H1 (cell line): ENCODE measurements at regions of chr1 and their contacts with region 1.

Region 1: DNA sequence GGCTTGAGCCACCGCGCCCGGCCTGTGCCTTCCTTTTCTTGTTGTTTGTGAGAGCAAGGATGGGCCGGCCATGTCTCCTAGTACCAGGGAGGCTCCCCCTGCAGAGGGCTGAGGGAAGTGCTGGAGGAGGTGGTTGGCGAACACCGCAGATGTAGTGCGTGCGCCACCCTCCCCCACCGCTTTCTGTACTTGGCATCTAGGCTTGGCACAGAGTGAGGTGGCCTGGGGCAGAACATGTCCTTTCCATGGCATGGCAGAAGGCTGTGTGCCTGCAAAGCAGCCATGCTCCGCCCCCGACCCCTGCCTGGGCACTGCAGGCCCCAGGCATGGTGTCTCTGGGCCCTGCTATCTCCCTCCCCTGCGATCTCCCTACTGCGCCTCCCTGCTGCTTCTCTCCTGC is 30.7 kb downstream of the ALPL start:
- DNase-seq: peak in 1 of 2 experiments; percentile 87
- H3K4me3 ChIP-seq: no peak overlapping the region
- H3K27ac ChIP-seq: no peak overlapping the region
- H3K4me1 ChIP-seq: peaks cover 10 to 24% (median 16%) of the 10 kb centered on the region in 4 experiments
- H3K27me3 ChIP-seq: no peaks in the 10 kb centered on the region
- CTCF ChIP-seq: peak; percentile 62 to 87 (median 79)
- EP300 ChIP-seq: no peak
- POLR2A ChIP-seq: no peak
- RAD21 ChIP-seq: peak; percentile 20 to 55; a peak in 3 of 4 replicates

Region 2: DNA sequence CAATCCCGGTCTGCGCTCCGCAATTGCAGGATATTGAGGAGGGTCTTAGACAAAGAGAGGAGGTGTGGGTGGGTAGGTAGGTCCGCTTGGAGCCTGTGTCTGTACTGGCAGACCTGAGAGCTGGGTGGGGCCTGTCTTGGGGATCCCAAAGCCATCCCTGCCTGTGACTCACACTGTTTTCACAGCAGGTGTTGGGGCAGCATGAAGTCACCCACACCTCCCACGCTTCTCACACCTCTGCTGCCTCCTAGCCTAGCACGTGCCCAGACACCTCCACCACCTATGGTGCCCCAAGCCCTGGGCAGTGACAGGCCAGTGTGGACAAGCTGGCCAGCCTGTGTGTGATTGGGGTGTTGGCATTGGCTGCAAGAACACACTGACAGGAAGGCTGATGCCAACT is 184.0 kb before region 1 on chr1:
- CTCF ChIA-PET with region 1: no interaction called
- POLR2A ChIA-PET with region 1: no interaction called
- DNase-seq: no peak
- H3K4me3 ChIP-seq: no peak overlapping the region
- H3K27ac ChIP-seq: no peak overlapping the region
- H3K4me1 ChIP-seq: peaks cover 0 to 2% (median 0%) of the 10 kb centered on the region in 4 experiments; a peak in 1 of 7 replicates
- H3K27me3 ChIP-seq: no peaks in the 10 kb centered on the region
- CTCF ChIP-seq: no peak
- EP300 ChIP-seq: no peak
- POLR2A ChIP-seq: no peak
- RAD21 ChIP-seq: no peak

Region 3: GRCh38 chr1:21451212-21451812 is 88.6 kb before region 1 on chr1:
- CTCF ChIA-PET with region 1: no interaction called
- POLR2A ChIA-PET with region 1: no interaction called
- DNase-seq: no peak
- H3K4me3 ChIP-seq: no peak overlapping the region
- H3K27ac ChIP-seq: no peak overlapping the region
- H3K4me1 ChIP-seq: no peaks in the 10 kb centered on the region
- H3K27me3 ChIP-seq: no peaks in the 10 kb centered on the region
- CTCF ChIP-seq: no peak
- EP300 ChIP-seq: no peak
- POLR2A ChIP-seq: no peak
- RAD21 ChIP-seq: no peak

Region 4: DNA sequence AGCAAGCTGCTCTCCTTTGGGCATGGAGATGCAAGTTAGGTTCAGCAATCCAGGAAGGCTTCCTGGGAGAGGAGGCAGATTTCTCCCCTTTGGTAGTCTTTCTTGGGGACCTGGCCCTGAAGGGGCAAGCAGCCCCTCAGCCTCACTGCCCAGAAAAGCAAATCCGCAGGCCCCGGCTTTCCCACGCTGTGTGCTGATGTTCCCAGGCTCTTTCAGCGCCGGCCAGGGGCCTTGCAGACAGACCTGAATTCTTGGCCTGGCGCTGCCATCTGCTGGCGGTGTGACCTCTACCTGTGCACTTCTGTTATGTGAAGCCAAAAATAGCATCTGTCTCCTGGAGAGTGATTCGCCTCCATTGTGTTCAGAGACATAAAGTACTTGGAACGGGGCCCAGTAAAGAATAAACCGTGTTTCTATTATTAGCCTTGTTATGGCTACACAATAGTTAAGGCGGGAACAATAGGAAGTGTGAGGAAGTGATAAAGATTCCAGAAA is 34.1 kb after region 1 on chr1:
- CTCF ChIA-PET with region 1: interaction called, 25 read pairs
- POLR2A ChIA-PET with region 1: no interaction called
- DNase-seq: peak; percentile 57 to 82
- H3K4me3 ChIP-seq: no peak overlapping the region
- H3K27ac ChIP-seq: no peak overlapping the region
- H3K4me1 ChIP-seq: peaks cover 2 to 7% (median 4%) of the 10 kb centered on the region in 4 experiments; a peak in 6 of 7 replicates
- H3K27me3 ChIP-seq: no peaks in the 10 kb centered on the region; a peak in 2 of 7 replicates
- CTCF ChIP-seq: peak; percentile 70 to 87 (median 79)
- EP300 ChIP-seq: no peak
- POLR2A ChIP-seq: no peak
- RAD21 ChIP-seq: peak; percentile 92 to 95

Region 5: GRCh38 chr1:21604208-21604957 is 64.5 kb after region 1 on chr1:
- CTCF ChIA-PET with region 1: no interaction called
- POLR2A ChIA-PET with region 1: no interaction called
- DNase-seq: no peak
- H3K4me3 ChIP-seq: no peak overlapping the region
- H3K27ac ChIP-seq: no peak overlapping the region
- H3K4me1 ChIP-seq: peaks cover 2 to 7% (median 3%) of the 10 kb centered on the region in 4 experiments; a peak in 6 of 7 replicates
- H3K27me3 ChIP-seq: no peaks in the 10 kb centered on the region
- CTCF ChIP-seq: no peak
- EP300 ChIP-seq: no peak
- POLR2A ChIP-seq: no peak
- RAD21 ChIP-seq: no peak